ENCODE measurements at regions of chr4 and their contacts with region 1.

Region 1: DNA sequence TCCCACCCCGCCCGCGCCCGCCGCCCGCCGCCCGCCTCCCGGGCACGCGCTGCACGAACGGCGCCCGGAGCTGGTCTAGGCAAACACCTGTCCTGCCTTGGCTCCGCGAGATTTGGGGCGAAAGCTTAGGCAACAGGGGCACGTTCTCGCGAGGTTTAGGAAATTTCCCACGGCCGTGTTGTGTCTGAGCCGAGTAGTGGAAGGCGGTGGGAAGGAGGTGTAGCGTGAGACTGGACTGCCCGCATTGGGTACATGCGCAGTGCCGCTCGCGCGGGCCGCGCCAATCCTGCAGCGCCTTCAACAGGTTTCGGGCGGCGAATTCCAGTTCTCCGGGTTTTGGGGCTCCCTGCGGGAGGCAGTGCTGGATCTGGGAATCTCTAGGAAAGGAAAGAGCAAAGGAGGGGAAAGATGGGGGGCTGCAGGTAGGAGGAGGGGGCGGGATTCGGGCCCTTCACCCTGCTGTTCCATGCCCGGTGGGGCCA is 1.3 kb upstream of the RBPJ start:
- DNase-seq: peak; percentile 96 to 99
- ATAC-seq: peak; percentile 83 to 85
- H3K4me3 ChIP-seq: peak overlapping the region; percentile 62 to 97 (median 83)
- H3K27ac ChIP-seq: peak overlapping the region; percentile 88 to 100 (median 97)
- H3K4me1 ChIP-seq: peaks cover 24 to 29% of the 10 kb centered on the region in 2 donors
- H3K27me3 ChIP-seq: no peaks in the 10 kb centered on the region
- CTCF ChIP-seq: no peak
- POLR2A ChIP-seq: no peak

Region 2: DNA sequence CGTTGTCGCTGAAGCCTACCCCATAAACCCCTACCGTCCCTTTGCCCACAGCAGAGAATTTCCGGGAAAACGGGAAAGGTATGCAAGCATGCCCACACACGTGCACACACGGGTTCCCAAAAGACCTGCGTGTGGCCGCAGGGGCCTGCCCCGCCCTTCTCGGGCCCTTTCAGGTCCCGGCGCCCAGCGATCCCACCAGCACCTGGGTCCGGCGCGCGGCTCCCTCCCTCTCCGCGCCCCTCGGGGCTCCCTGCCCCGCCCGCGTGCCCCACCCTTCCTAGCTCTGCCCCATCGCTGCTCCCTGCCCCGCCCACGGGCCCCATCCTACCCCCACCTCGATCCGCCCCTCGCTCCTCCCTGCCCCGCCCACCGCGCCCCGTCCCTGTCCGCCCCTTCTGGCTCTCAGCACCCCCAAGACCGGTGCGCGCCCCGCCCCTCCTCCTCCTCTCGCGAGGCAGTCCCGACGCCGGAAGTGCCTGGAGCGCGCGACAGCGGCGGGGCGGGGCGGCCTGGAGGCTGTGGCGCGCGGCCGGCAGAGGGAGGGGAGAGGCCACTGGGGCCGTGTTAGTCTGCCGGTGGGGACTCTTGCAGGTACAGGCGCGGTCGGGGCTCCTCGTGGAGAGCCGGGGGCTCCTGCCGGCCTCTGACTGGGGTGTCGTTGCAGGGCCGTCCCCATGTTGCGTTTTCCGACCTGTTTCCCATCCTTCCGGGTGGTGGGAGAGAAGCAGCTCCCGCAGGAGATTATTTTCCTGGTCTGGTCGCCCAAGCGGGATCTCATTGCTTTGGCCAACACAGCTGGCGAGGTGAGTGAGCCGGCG is 942.5 kb before region 1 on chr4 and contains the start of gene ANAPC4:
- in situ Hi-C with region 1: no loop called
- intact Hi-C with region 1: loop called (anchors 5 kb)
- DNase-seq: peak; percentile 87 to 91
- ATAC-seq: peak; percentile 81 to 84
- H3K4me3 ChIP-seq: peak within 1 kb of the TSS; percentile 85 to 99 (median 92)
- H3K27ac ChIP-seq: peak within 1 kb of the TSS; percentile 77 to 83 (median 80)
- H3K4me1 ChIP-seq: peaks cover 3 to 8% of the 10 kb centered on the region in 2 donors
- H3K27me3 ChIP-seq: no peaks in the 10 kb centered on the region
- CTCF ChIP-seq: peak in 2 of 5 experiments; percentile 32 to 37
- POLR2A ChIP-seq: peak; percentile 38 to 56
- total RNA-seq, gene ANAPC4: 11.8 to 20.2 (median 14.7) TPM

Region 3: DNA sequence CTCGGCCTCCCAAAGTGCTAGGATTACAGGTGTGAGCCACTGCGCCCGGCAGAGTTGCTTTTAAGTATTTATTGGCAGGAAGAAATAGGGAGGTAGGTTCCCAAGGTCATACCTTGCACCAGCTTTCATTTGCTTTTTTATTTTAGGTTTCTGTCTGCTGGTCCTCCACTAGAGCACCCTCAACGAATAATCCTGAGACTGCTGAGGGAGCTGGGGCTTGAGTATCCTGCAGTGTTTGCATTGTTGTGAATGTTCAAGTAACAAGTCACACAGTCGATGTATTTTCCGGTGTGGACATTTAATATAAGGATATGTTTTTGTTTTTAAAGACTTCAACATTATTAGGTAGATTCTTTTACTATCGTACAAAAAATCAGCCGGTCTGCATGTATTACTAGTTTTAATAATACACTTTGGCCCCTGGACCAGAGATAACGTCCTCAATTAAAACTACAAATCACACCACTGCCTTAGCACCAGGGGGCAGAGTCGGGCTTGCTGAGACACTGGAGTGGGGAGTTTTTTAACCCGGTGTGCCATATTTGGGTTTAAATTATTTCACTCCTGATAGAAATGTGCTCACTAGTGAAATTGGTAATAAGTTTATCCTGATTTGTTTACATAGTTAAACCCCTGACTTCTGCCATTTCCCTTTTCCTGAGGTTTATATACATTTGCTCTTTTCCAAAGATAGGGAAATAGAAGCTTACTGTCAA is 393.9 kb before region 1 on chr4:
- in situ Hi-C with region 1: no loop called
- intact Hi-C with region 1: loop called (anchors 5 kb)
- DNase-seq: no peak
- ATAC-seq: no peak
- H3K4me3 ChIP-seq: no peak overlapping the region
- H3K27ac ChIP-seq: no peak overlapping the region
- H3K4me1 ChIP-seq: peaks cover 54 to 65% of the 10 kb centered on the region in 2 donors
- H3K27me3 ChIP-seq: no peaks in the 10 kb centered on the region
- CTCF ChIP-seq: peak in 4 of 5 experiments; percentile 16 to 44 (median 30)
- POLR2A ChIP-seq: no peak

Region 4: GRCh38 chr4:26248647-26249046 is 70.9 kb before region 1 on chr4:
- in situ Hi-C with region 1: no loop called
- intact Hi-C with region 1: no loop called
- DNase-seq: peak in 1 of 2 donors; percentile 27
- ATAC-seq: no peak
- H3K4me3 ChIP-seq: no peak overlapping the region
- H3K27ac ChIP-seq: no peak overlapping the region
- H3K4me1 ChIP-seq: peaks cover 0 to 6% of the 10 kb centered on the region in 2 donors
- H3K27me3 ChIP-seq: no peaks in the 10 kb centered on the region
- CTCF ChIP-seq: no peak
- POLR2A ChIP-seq: no peak

Region 5: DNA sequence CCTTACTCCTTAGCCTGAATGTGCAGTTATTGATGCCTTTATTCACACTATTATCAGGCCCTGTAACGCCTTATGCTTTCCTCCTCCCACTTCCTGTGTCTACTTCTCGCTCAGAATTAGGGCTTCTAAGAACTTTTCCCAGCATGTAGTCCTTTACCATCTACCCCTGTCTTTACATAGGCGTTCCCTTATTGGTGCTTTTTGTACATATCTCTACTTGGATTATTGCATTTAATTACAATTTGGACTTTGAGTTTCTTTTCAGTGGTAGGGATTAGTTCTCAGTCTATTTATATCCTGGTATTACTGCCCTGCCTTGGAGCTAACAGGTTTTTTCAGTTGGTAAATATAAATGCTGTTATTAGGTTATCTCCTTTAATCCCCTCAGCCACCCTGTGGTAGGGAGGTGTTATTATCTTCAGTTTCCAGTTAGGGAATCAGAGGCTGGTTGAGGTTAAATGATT is 85.3 kb after region 1 on chr4:
- in situ Hi-C with region 1: loop called in 1 of 4 experiments (anchors 5 kb)
- intact Hi-C with region 1: no loop called
- DNase-seq: no peak
- ATAC-seq: no peak
- H3K4me3 ChIP-seq: no peak overlapping the region
- H3K27ac ChIP-seq: no peak overlapping the region
- H3K4me1 ChIP-seq: peaks cover 9 to 12% of the 10 kb centered on the region in 2 donors
- H3K27me3 ChIP-seq: no peaks in the 10 kb centered on the region
- CTCF ChIP-seq: no peak
- POLR2A ChIP-seq: no peak

Region 6: GRCh38 chr4:26860157-26860921 is 540.8 kb after region 1 on chr4 and contains the start of gene STIM2:
- in situ Hi-C with region 1: loop called in 2 of 4 experiments (anchors 25 kb)
- intact Hi-C with region 1: loop called (anchors 2 kb)
- DNase-seq: peak; percentile 93 to 95
- ATAC-seq: peak; percentile 81 to 87
- H3K4me3 ChIP-seq: peak within 1 kb of the TSS; percentile 76 to 84 (median 78)
- H3K27ac ChIP-seq: peak within 1 kb of the TSS; percentile 78 to 90 (median 86)
- H3K4me1 ChIP-seq: peaks cover 47 to 48% of the 10 kb centered on the region in 2 donors
- H3K27me3 ChIP-seq: no peaks in the 10 kb centered on the region
- CTCF ChIP-seq: peak; percentile 6 to 52 (median 38)
- POLR2A ChIP-seq: peak; percentile 76 to 85
- total RNA-seq, gene STIM2: 3.9 to 7.6 (median 4.9) TPM

Measured in gastrocnemius medialis (tissue), 4 donors.